ENCODE measurements at regions of chr12 and their contacts with region 1.

Region 1: DNA sequence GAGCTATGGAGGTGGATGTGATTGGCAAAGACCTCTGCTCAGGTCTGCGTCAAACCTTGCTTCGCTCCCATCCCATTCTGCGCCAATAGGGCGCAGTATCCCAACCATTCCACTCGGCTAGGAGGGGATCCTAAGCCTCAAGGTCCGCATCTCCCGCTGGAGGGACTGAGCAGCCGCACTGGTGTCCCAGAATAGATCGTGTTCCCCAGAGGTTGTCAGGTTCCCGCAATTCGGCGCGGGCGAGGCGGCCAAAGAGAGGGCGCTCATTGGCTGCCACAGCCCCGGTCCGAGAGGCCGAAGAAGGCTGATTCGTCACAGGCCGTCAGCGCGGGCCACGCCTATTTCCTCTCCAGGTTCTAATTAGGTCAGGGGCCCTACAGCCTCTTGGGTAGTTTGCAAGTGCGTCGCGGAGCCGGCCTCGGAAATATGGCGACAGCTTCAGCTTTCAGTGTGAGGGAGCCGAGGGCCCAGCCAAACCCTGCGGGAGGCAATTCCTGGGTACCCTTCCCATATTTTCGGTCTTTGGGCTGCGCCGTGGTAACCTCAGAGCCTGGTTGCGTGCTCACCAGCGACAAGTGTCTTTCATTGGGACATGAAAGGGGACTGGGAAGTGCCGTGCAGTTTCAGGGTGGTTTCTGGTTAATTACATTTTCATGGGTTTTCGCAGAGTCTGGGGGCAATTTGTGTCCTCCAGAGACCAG is 5.0 kb downstream of the OR10AD1 start:
- DNase-seq: peak; percentile 75 to 95 (median 88)
- ATAC-seq: peak; percentile 88
- H3K4me3 ChIP-seq: peak overlapping the region; percentile 71 to 90
- H3K4me3 Mint-ChIP-seq: peak overlapping the region; percentile 88
- H3K27ac ChIP-seq: peak overlapping the region; percentile 97
- H3K27ac Mint-ChIP-seq: peak overlapping the region; percentile 93
- H3K4me1 ChIP-seq: peaks cover 20% of the 10 kb centered on the region
- H3K4me1 Mint-ChIP-seq: peaks cover 51% of the 10 kb centered on the region
- H3K27me3 ChIP-seq: no peaks in the 10 kb centered on the region
- H3K27me3 Mint-ChIP-seq: peaks cover 4% of the 10 kb centered on the region
- CTCF ChIP-seq: no peak

Region 2: GRCh38 chr12:47779301-47779942 is 418.7 kb before region 1 on chr12:
- CTCF ChIA-PET with region 1: no interaction called
- POLR2A ChIA-PET with region 1: no interaction called
- intact Hi-C with region 1: no loop called
- DNase-seq: peak; percentile 87 to 98 (median 91)
- ATAC-seq: peak; percentile 98
- H3K4me3 ChIP-seq: no peak overlapping the region
- H3K4me3 Mint-ChIP-seq: no peak overlapping the region
- H3K27ac ChIP-seq: no peak overlapping the region
- H3K27ac Mint-ChIP-seq: no peak overlapping the region
- H3K4me1 ChIP-seq: peaks cover 8% of the 10 kb centered on the region
- H3K4me1 Mint-ChIP-seq: peaks cover 14% of the 10 kb centered on the region
- H3K27me3 ChIP-seq: no peaks in the 10 kb centered on the region
- H3K27me3 Mint-ChIP-seq: no peaks in the 10 kb centered on the region
- CTCF ChIP-seq: peak; percentile 82

Region 3: GRCh38 chr12:48105862-48106680 is 92.0 kb before region 1 on chr12 and contains the start of gene SENP1:
- CTCF ChIA-PET with region 1: interaction called, 3 read pairs
- POLR2A ChIA-PET with region 1: interaction called, 4 read pairs
- intact Hi-C with region 1: loop called in 1 of 2 experiments (anchors 1 kb)
- DNase-seq: peak; percentile 82 to 95 (median 89)
- ATAC-seq: peak; percentile 78
- H3K4me3 ChIP-seq: peak within 1 kb of the TSS; percentile 81 to 89
- H3K4me3 Mint-ChIP-seq: peak within 1 kb of the TSS; percentile 88
- H3K27ac ChIP-seq: peak within 1 kb of the TSS; percentile 84 to 95
- H3K27ac Mint-ChIP-seq: peak within 1 kb of the TSS; percentile 94
- H3K4me1 ChIP-seq: peaks cover 21% of the 10 kb centered on the region
- H3K4me1 Mint-ChIP-seq: peaks cover 54% of the 10 kb centered on the region
- H3K27me3 ChIP-seq: no peaks in the 10 kb centered on the region
- H3K27me3 Mint-ChIP-seq: no peaks in the 10 kb centered on the region
- CTCF ChIP-seq: no peak
- total RNA-seq, gene SENP1: 24.4 to 24.6 TPM

Region 4: DNA sequence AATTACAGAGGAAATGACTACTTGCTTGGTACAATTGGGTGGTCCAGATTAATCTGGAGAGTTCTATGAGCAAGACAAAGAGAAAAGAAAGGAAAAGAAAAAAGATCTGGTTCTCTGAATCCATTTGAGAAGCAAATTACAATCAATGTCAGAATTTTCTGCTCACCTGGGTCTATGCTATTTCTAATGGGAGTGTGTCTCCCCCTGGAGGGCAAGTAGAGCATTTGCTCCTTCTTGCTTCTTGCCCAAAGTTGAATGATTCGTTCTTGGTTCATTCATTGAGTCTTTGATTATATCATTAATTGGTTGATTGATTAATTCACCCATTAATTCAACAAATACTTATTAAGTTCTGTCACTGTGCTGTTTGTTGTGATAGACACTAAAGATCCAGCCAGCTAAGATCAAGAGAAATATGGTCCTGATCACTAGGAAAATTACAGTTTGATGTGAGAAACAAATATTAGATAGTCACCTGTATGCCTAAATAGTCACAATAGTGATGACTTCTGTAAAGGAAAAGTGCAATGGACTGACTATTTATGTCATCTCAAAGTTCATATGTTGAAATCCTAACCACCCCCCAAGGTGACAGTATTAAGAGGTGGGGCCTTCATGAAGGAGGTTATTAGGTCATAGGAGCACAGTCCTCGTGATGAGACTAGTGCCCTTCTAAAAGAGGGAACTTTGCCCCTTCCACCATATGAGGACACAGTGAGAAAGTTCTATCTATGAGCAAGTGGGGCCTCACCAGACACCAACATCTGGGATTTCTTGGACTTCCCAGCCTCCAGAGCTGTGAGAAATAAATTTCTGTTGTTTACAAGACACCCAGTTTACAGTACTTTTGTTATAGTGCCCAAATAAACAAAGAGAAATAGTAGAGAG is 32.8 kb before region 1 on chr12:
- CTCF ChIA-PET with region 1: interaction called, 18 read pairs
- POLR2A ChIA-PET with region 1: no interaction called
- intact Hi-C with region 1: no loop called
- DNase-seq: peak in 7 of 9 experiments; percentile 34 to 85 (median 56)
- ATAC-seq: peak; percentile 90
- H3K4me3 ChIP-seq: no peak overlapping the region
- H3K4me3 Mint-ChIP-seq: no peak overlapping the region
- H3K27ac ChIP-seq: no peak overlapping the region
- H3K27ac Mint-ChIP-seq: no peak overlapping the region
- H3K4me1 ChIP-seq: no peaks in the 10 kb centered on the region
- H3K4me1 Mint-ChIP-seq: peaks cover 6% of the 10 kb centered on the region
- H3K27me3 ChIP-seq: no peaks in the 10 kb centered on the region
- H3K27me3 Mint-ChIP-seq: peaks cover 10% of the 10 kb centered on the region
- CTCF ChIP-seq: peak; percentile 98

Region 5: GRCh38 chr12:48216785-48217184 is 18.7 kb after region 1 on chr12:
- CTCF ChIA-PET with region 1: interaction called, 15 read pairs
- POLR2A ChIA-PET with region 1: interaction called, 9 read pairs
- intact Hi-C with region 1: no loop called
- DNase-seq: no peak
- ATAC-seq: no peak
- H3K4me3 ChIP-seq: no peak overlapping the region
- H3K4me3 Mint-ChIP-seq: no peak overlapping the region
- H3K27ac ChIP-seq: no peak overlapping the region
- H3K27ac Mint-ChIP-seq: no peak overlapping the region
- H3K4me1 ChIP-seq: peaks cover 8% of the 10 kb centered on the region
- H3K4me1 Mint-ChIP-seq: peaks cover 14% of the 10 kb centered on the region
- H3K27me3 ChIP-seq: peaks cover 0 to 5% of the 10 kb centered on the region in 2 experiments
- H3K27me3 Mint-ChIP-seq: peaks cover 7% of the 10 kb centered on the region
- CTCF ChIP-seq: no peak

Region 6: GRCh38 chr12:48454667-48455066 is 256.5 kb after region 1 on chr12:
- CTCF ChIA-PET with region 1: interaction called, 26 read pairs
- POLR2A ChIA-PET with region 1: no interaction called
- intact Hi-C with region 1: loop called in 1 of 2 experiments (anchors 5 kb)
- DNase-seq: peak in 2 of 9 experiments; percentile 45 to 63
- ATAC-seq: peak; percentile 54
- H3K4me3 ChIP-seq: no peak overlapping the region
- H3K4me3 Mint-ChIP-seq: no peak overlapping the region
- H3K27ac ChIP-seq: no peak overlapping the region
- H3K27ac Mint-ChIP-seq: no peak overlapping the region
- H3K4me1 ChIP-seq: no peaks in the 10 kb centered on the region
- H3K4me1 Mint-ChIP-seq: no peaks in the 10 kb centered on the region
- H3K27me3 ChIP-seq: no peaks in the 10 kb centered on the region
- H3K27me3 Mint-ChIP-seq: peaks cover 11% of the 10 kb centered on the region
- CTCF ChIP-seq: no peak

Region 7: DNA sequence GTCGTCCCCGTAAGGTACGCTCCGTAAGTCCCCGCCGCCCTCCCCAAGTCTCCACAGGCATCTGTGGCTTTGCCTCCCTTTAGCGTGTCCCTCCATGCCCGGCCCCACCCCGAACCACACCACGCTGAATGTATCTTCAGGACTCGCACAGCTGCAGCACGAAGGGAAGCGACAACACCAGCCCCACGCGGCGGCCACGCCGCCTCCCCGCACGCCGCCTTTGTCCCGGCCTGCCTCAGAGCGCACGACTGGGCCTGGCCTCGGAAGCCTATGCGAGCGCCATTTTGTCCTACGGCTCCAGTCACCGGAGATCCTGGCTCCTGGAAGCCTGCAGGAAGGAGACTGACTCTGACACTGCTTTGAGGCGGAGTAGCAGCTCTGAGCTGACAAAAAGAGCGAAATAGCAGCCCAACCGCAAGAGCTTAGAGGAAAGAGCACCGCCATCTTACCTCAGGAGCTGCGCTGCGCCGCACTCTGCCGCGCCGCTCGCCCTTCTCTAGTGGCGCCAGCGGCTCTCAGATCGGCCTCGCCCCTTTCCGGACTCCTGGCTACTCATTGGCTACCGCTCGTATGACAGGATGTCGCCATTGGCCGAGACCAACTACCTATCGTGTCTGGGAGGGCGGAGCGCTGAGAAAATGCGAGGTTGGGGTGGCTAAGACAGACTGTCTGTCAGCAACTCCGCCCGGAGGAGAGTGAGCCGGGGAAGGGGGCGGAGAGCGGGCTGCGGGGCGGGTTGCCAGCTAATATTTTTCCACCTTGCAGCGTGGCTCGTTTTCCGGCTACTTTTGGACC is 483.8 kb after region 1 on chr12 and contains the start of gene KANSL2:
- CTCF ChIA-PET with region 1: no interaction called
- POLR2A ChIA-PET with region 1: no interaction called
- intact Hi-C with region 1: loop called in 1 of 2 experiments (anchors 10 kb)
- DNase-seq: peak; percentile 93 to 99 (median 96)
- ATAC-seq: peak; percentile 94
- H3K4me3 ChIP-seq: peak within 1 kb of the TSS; percentile 66 to 91
- H3K4me3 Mint-ChIP-seq: peak within 1 kb of the TSS; percentile 95
- H3K27ac ChIP-seq: peak within 1 kb of the TSS; percentile 80 to 90
- H3K27ac Mint-ChIP-seq: peak within 1 kb of the TSS; percentile 98
- H3K4me1 ChIP-seq: peaks cover 45% of the 10 kb centered on the region
- H3K4me1 Mint-ChIP-seq: peaks cover 49% of the 10 kb centered on the region
- H3K27me3 ChIP-seq: no peaks in the 10 kb centered on the region
- H3K27me3 Mint-ChIP-seq: no peaks in the 10 kb centered on the region
- CTCF ChIP-seq: no peak
- total RNA-seq, gene KANSL2: 175 to 179 TPM